Caco-2 (cell line): ENCODE measurements at regions of chr5 and their contacts with region 1.

Region 1: GRCh38 chr5:142215915-142216681 is 107.5 kb downstream of the NDFIP1 start:
- DNase-seq: peak; percentile 66 to 89
- H3K4me3 ChIP-seq: no peak overlapping the region
- H3K4me3 Mint-ChIP-seq: no peak overlapping the region
- H3K27ac Mint-ChIP-seq: peak overlapping the region; percentile 74
- H3K4me1 ChIP-seq: peaks cover 22% of the 10 kb centered on the region
- H3K4me1 Mint-ChIP-seq: peaks cover 16% of the 10 kb centered on the region
- H3K27me3 ChIP-seq: no peaks in the 10 kb centered on the region
- H3K27me3 Mint-ChIP-seq: no peaks in the 10 kb centered on the region
- CTCF ChIP-seq: peak in 1 of 2 experiments; percentile 6

Region 2: GRCh38 chr5:142167458-142167857 is 48.6 kb before region 1 on chr5:
- CTCF ChIA-PET with region 1: no interaction called
- POLR2A ChIA-PET with region 1: no interaction called
- intact Hi-C with region 1: loop called (anchors 1 kb)
- DNase-seq: no peak
- H3K4me3 ChIP-seq: no peak overlapping the region
- H3K4me3 Mint-ChIP-seq: no peak overlapping the region
- H3K27ac Mint-ChIP-seq: no peak overlapping the region
- H3K4me1 ChIP-seq: peaks cover 32% of the 10 kb centered on the region
- H3K4me1 Mint-ChIP-seq: peaks cover 45% of the 10 kb centered on the region
- H3K27me3 ChIP-seq: no peaks in the 10 kb centered on the region
- H3K27me3 Mint-ChIP-seq: no peaks in the 10 kb centered on the region
- CTCF ChIP-seq: no peak

Region 3: GRCh38 chr5:142306077-142306502 is 90.0 kb after region 1 on chr5:
- CTCF ChIA-PET with region 1: no interaction called
- POLR2A ChIA-PET with region 1: no interaction called
- intact Hi-C with region 1: loop called (anchors 5 kb)
- DNase-seq: peak; percentile 57 to 80
- H3K4me3 ChIP-seq: no peak overlapping the region
- H3K4me3 Mint-ChIP-seq: no peak overlapping the region
- H3K27ac Mint-ChIP-seq: peak overlapping the region; percentile 43
- H3K4me1 ChIP-seq: peaks cover 25% of the 10 kb centered on the region
- H3K4me1 Mint-ChIP-seq: peaks cover 26% of the 10 kb centered on the region
- H3K27me3 ChIP-seq: no peaks in the 10 kb centered on the region
- H3K27me3 Mint-ChIP-seq: no peaks in the 10 kb centered on the region
- CTCF ChIP-seq: no peak